ENCODE measurements at regions of chr19 and their contacts with region 1.

Region 1: DNA sequence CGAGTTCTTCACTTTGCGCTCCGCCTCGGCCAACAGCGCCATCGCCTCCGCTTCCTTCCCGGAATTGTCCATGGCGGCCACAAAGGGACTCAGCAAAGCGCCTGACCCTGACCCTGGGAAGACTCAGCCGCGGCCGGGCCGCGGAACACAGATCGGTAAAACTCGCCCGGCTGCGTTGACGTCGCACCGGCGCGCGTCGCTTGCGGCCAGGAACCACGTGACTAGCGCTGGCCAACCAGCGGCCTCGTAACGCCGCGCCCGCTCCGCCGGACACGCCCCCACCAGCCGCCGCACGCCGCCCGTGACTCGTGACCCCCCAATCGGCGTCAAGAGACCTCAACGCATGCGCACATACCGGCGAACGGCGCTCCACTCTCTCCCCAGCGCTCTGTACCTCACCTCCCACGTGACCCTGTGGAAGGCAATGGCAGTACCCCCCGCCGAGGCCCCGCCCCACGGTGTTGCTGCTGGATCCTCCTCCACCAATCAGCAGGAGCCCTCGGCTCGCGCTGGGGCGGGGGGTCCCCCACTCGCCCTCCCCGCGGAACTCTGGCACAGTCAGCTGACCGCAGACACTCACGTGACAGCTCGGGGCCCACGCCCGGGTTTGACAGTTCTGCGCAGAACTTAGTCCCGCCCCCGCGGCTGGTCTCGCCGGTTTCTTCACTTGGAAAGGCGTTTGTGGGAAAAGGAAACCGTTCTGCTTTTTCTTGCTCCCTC is at the start of gene NAPA:
- DNase-seq: peak; percentile 100
- ATAC-seq: peak; percentile 97
- H3K4me3 Mint-ChIP-seq: peak within 1 kb of the TSS; percentile 100
- H3K27ac Mint-ChIP-seq: peak within 1 kb of the TSS; percentile 99
- H3K4me1 Mint-ChIP-seq: peaks cover 80% of the 10 kb centered on the region
- H3K27me3 Mint-ChIP-seq: no peaks in the 10 kb centered on the region
- total RNA-seq, gene NAPA: 102 to 124 TPM

Region 2: DNA sequence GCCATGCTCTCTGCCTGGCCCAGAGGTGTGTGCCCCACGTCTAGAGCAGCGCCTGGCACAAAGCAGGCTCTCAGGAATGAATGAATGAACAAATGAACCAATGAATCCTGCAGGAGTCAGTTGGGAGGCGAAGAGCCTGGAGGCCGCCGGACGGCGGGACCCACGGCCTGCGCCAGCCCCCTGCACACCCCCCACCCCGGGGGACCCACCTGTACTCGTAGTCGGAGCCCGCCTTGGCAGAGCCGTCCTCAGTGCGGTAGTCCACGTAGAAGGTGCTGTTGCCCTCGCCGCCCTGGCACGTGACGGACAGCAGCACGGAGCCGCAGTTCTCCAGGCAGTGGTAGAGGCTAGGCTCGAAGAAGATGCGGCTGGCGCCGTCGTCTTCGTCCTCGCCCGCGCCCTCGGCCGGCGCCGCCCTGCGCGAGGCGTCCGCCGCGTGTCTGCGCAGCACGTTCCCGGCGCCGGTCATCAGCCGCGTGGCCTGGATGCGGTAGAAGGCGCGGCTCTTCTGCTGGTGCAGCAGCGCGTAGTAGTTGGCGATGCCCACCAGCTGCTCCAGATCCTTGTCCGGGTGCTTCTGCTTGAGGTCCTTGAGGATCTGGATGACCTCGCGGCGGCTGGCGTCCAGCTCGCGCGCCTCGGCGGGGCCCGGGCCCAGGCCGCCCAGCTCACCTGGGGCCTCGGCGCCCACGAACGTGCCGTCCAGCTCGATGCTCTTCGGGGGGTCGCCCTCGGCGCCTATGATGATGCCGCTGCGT is 58.1 kb before region 1 on chr19:
- CTCF ChIA-PET with region 1: no interaction called
- DNase-seq: no peak
- ATAC-seq: no peak
- H3K4me3 Mint-ChIP-seq: no peak overlapping the region
- H3K27ac Mint-ChIP-seq: no peak overlapping the region
- H3K4me1 Mint-ChIP-seq: peaks cover 2% of the 10 kb centered on the region
- H3K27me3 Mint-ChIP-seq: peaks cover 35% of the 10 kb centered on the region

Region 3: GRCh38 chr19:47600246-47601179 is 85.5 kb after region 1 on chr19:
- CTCF ChIA-PET with region 1: interaction called, 20 read pairs
- DNase-seq: peak; percentile 100
- ATAC-seq: peak; percentile 95
- H3K4me3 Mint-ChIP-seq: peak overlapping the region; percentile 78
- H3K27ac Mint-ChIP-seq: peak overlapping the region; percentile 91
- H3K4me1 Mint-ChIP-seq: peaks cover 46% of the 10 kb centered on the region
- H3K27me3 Mint-ChIP-seq: peaks cover 4% of the 10 kb centered on the region

Measured in activated CD8-positive, alpha-beta memory T cell treated with anti-CD3 and anti-CD28 coated beads, Interleukin-2, amount 10 ng/mL, durations not matched to agents 7 days and 5 days (primary cell).